ENCODE measurements at regions of chr5 and their contacts with region 1.

Region 1: DNA sequence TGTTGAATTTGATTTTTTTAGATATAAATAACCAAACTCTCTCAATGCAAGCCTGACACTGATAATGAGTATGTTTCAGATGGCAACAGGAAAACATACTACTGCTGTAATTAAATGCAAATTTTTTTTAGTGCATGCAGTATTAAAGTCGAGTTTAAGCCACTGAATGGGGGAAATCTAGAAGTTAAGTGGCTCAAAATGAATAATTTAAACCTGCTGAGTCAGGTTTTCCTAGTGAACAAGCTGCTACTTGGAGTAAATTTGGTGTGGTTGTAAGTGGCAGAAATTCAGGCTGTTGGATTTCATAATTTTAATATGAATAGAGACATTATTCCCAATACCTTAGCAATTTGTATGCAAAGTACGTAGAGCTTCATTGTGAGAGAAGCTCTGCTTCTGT is 121.8 kb downstream of the SLF1 start:
- DNase-seq: no peak
- H3K4me3 ChIP-seq: no peak overlapping the region
- H3K27ac ChIP-seq: no peak overlapping the region
- H3K4me1 ChIP-seq: peaks cover 9% of the 10 kb centered on the region
- CTCF ChIP-seq: no peak

Region 2: GRCh38 chr5:93582677-93583438 is 1157.4 kb before region 1 on chr5 and contains the start of gene NR2F1:
- CTCF ChIA-PET with region 1: no interaction called
- POLR2A ChIA-PET with region 1: no interaction called
- intact Hi-C with region 1: loop called (anchors 5 kb)
- DNase-seq: no peak
- H3K4me3 ChIP-seq: no peak within 1 kb of the TSS
- H3K27ac ChIP-seq: no peak within 1 kb of the TSS
- H3K4me1 ChIP-seq: no peaks in the 10 kb centered on the region
- CTCF ChIP-seq: no peak
- total RNA-seq, gene NR2F1: not detected in 2 replicates

Region 3: GRCh38 chr5:94524841-94525697 is 215.2 kb before region 1 on chr5:
- CTCF ChIA-PET with region 1: interaction called, 5 read pairs
- POLR2A ChIA-PET with region 1: no interaction called
- intact Hi-C with region 1: loop called (anchors 1 kb)
- DNase-seq: peak; percentile 70
- H3K4me3 ChIP-seq: no peak overlapping the region
- H3K27ac ChIP-seq: no peak overlapping the region
- H3K4me1 ChIP-seq: no peaks in the 10 kb centered on the region
- CTCF ChIP-seq: peak; percentile 93

Region 4: DNA sequence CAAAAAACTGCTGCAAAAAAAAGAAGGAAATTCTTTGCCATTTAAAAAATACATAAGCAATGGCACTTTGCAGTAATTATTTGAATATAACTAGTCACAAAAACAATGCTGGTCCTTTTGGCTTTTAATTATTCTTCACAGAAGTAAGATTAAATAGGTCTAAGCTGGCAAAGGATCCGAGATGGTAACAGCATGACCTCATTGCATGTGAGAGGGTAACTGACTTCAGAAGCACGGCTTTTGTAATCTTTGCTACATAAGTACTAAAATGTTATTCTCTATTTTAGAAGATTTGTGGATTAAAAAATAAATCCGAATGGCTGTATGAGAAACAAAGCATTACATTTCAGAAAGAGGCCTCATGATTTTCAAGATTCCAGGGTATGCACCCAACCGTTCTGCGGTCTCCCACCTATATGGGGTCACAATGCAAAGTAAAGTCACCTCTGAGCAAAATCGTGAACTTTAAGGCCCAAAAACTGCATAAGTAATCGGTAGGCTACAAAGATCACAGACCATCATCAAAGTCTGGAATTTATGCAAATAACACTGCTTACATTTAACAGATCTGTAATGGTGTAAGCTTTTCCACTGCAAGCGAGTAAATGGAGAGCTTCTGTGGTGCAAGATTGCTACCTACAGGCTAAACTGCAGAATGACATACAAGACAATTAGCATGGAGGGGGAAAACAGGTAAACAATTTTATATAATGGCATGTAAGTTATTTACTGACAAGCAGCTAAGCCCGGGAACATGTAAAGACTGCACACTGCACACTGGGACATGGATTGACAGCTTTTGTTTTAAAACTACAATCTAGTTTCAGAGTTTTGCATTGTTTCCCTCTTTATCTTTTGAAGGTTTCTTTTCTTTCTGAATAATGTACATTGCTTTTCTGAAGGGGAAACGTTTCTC is 109.8 kb after region 1 on chr5:
- CTCF ChIA-PET with region 1: no interaction called
- POLR2A ChIA-PET with region 1: no interaction called
- intact Hi-C with region 1: loop called (anchors 2 kb)
- DNase-seq: peak; percentile 79
- H3K4me3 ChIP-seq: no peak overlapping the region
- H3K27ac ChIP-seq: no peak overlapping the region
- H3K4me1 ChIP-seq: peaks cover 31% of the 10 kb centered on the region
- CTCF ChIP-seq: peak; percentile 97

Region 5: DNA sequence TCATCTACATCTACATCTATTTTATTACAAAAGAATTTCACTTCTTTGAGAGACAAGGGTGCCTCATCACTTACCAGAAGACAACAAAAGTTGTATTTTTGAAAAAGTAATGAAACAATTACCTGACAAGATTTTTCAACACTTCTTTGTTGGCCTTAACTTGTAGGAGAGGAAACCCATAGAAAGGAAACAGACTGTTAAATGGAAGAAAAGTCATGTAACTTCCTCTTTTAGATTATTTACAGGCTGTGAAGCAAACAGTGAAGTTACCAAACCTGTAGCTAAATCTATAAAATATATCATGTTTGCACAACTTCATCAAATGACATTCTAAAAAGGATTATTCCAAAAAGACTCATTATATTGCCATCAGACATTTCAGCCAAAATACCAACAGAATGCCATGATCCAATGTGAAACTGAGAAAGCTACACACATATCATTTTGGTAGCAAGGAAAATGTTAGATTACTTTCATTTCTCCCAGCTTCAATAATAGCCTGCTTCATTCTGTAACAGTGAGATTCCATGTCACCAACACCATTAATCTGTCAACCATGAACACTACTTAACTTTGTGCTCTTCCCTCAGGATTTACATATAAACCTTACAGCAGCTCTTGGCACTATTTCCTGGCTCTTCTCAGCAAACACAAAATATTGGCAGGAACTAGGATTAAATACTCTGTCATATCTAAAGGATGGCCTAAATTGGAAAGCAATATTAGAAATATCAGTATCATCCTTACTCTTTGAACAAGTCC is 422.1 kb after region 1 on chr5:
- CTCF ChIA-PET with region 1: no interaction called
- POLR2A ChIA-PET with region 1: no interaction called
- intact Hi-C with region 1: no loop called
- DNase-seq: no peak
- H3K4me3 ChIP-seq: no peak overlapping the region
- H3K27ac ChIP-seq: no peak overlapping the region
- H3K4me1 ChIP-seq: no peaks in the 10 kb centered on the region
- CTCF ChIP-seq: no peak

Measured in OCI-LY7 (cell line).